ENCODE measurements at regions of chr19 and their contacts with region 1.

Region 1: GRCh38 chr19:15264061-15264932 is 32.0 kb upstream of the EPHX3 start:
- DNase-seq: peak; percentile 81 to 86 (median 83)
- ATAC-seq: no peak
- H3K4me3 ChIP-seq: no peak overlapping the region
- H3K27ac ChIP-seq: peak overlapping the region; percentile 71 to 89 (median 78)
- H3K4me1 ChIP-seq: peaks cover 73% of the 10 kb centered on the region
- H3K27me3 ChIP-seq: no peaks in the 10 kb centered on the region
- CTCF ChIP-seq: peak; percentile 50 to 81 (median 71)
- POLR2A ChIP-seq: no peak

Region 2: GRCh38 chr19:15379083-15379995 is 115.0 kb after region 1 on chr19 and contains the start of gene AKAP8:
- intact Hi-C with region 1: loop called (anchors 10 kb)
- DNase-seq: peak; percentile 98 to 99 (median 99)
- ATAC-seq: peak; percentile 97
- H3K4me3 ChIP-seq: peak within 1 kb of the TSS; percentile 88 to 98
- H3K27ac ChIP-seq: peak within 1 kb of the TSS; percentile 88 to 98 (median 94)
- H3K4me1 ChIP-seq: peaks cover 44% of the 10 kb centered on the region
- H3K27me3 ChIP-seq: no peaks in the 10 kb centered on the region
- CTCF ChIP-seq: no peak
- POLR2A ChIP-seq: peak; percentile 85 to 90 (median 89)
- total RNA-seq, gene AKAP8: 11.2 to 19.4 TPM

Measured in body of pancreas (tissue), 4 donors.